ENCODE measurements at regions of chr14 and their contacts with region 1.

Region 1: DNA sequence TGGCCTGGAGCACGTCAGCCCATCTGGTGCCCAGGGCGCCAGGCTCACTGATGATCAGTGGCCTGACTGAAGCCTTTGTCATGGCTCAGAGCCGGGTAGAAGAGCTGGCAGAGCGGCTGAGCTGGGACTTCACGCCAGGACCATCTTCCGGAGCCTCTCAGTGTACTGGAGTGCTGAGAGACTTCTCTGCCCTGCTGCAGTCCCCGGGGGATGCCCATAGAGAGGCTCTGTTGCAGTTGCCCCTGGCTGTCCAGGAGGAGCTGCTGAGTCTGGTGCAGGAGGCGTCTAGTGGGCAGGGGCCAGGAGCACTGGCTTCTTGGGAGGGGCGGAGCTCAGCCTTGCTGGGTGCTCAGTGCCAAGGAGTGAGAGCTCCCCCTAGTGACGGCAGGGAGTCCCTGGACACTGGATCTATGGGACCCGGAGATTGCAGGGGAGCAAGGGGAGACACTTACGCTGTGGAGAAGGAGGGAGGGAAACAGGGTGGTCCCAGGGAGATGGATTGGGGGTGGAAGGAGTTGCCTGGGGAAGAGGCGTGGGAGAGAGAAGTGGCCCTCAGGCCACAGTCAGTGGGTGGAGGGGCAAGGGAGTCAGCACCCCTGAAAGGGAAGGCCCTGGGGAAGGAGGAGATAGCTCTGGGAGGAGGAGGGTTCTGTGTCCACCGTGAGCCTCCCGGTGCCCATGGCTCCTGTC is 2.0 kb downstream of the KHNYN start:
- DNase-seq: peak; percentile 90
- ATAC-seq: peak; percentile 41
- H3K4me3 ChIP-seq: peak overlapping the region in 4 of 5 experiments; percentile 77 to 98 (median 93)
- H3K4me3 Mint-ChIP-seq: peak overlapping the region; percentile 94
- H3K27ac ChIP-seq: peak overlapping the region; percentile 98 to 99
- H3K27ac Mint-ChIP-seq: peak overlapping the region; percentile 98
- H3K4me1 ChIP-seq: peaks cover 32 to 43% of the 10 kb centered on the region in 2 donors
- H3K4me1 Mint-ChIP-seq: peaks cover 50% of the 10 kb centered on the region
- H3K27me3 ChIP-seq: no peaks in the 10 kb centered on the region
- H3K27me3 Mint-ChIP-seq: no peaks in the 10 kb centered on the region
- CTCF ChIP-seq: peak; percentile 87

Region 2: DNA sequence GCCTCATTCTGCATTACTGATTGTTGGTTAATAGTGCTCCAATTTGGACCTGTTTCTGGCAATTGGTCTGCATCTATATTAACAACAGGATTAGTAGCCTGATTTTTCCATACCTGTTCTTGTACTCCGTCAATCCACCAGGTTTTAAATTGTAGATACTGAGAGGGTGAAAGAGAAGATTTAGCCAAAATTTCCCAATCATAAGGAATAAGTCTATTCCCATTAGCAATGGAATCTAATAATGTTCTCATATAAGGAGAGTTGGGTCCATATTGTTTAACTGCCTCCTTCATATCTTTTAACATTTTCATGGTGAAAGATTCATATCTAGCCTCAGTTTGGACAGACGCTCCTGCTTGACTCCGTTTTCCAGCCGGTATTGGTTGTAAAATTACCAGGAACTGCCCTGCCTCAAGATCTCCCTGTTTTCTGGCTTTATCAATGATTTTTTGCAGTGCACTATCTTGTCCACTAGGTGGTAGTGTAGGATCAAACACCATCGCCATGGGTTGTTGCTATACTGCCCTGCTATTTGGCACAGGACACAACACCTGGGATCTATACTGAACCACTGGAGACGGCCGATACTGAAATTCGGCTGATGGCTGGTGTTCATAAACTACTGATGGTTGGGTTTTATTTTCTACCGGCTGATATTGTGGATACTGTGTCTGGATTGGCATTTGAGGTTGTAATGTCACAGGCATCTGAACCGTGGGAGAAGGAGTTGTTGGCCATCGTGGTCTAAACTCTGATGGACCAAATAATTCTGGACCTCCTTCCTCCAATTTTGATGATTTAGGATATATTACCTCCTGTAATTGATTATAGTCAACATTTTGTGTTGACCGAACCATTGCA is 417.8 kb before region 1 on chr14:
- CTCF ChIA-PET with region 1: no interaction called
- POLR2A ChIA-PET with region 1: no interaction called
- intact Hi-C with region 1: loop called (anchors 5 kb)
- DNase-seq: peak; percentile 83
- ATAC-seq: peak; percentile 92
- H3K4me3 ChIP-seq: no peak overlapping the region
- H3K4me3 Mint-ChIP-seq: no peak overlapping the region
- H3K27ac ChIP-seq: no peak overlapping the region
- H3K27ac Mint-ChIP-seq: no peak overlapping the region
- H3K4me1 ChIP-seq: peaks cover 0 to 3% of the 10 kb centered on the region in 2 donors
- H3K4me1 Mint-ChIP-seq: peaks cover 30% of the 10 kb centered on the region
- H3K27me3 ChIP-seq: no peaks in the 10 kb centered on the region
- H3K27me3 Mint-ChIP-seq: no peaks in the 10 kb centered on the region
- CTCF ChIP-seq: peak; percentile 97

Region 3: GRCh38 chr14:24299255-24300195 is 132.2 kb before region 1 on chr14 and contains the starts of genes DHRS1 and NOP9:
- CTCF ChIA-PET with region 1: interaction called, 28 read pairs
- POLR2A ChIA-PET with region 1: interaction called, 6 read pairs
- intact Hi-C with region 1: no loop called
- DNase-seq: peak; percentile 95
- ATAC-seq: peak; percentile 86
- H3K4me3 ChIP-seq: peak within 1 kb of the TSS; percentile 58 to 93 (median 77)
- H3K4me3 Mint-ChIP-seq: peak within 1 kb of the TSS; percentile 96
- H3K27ac ChIP-seq: peak within 1 kb of the TSS; percentile 79 to 83
- H3K27ac Mint-ChIP-seq: peak within 1 kb of the TSS; percentile 98
- H3K4me1 ChIP-seq: peaks cover 30 to 41% of the 10 kb centered on the region in 2 donors
- H3K4me1 Mint-ChIP-seq: peaks cover 48% of the 10 kb centered on the region
- H3K27me3 ChIP-seq: no peaks in the 10 kb centered on the region
- H3K27me3 Mint-ChIP-seq: no peaks in the 10 kb centered on the region
- CTCF ChIP-seq: no peak
- total RNA-seq, gene DHRS1: 42.7 and 43.7 TPM in 2 replicates
- total RNA-seq, gene NOP9: 22.6 and 24.5 TPM in 2 replicates

Region 4: GRCh38 chr14:24327303-24327702 is 104.4 kb before region 1 on chr14:
- CTCF ChIA-PET with region 1: interaction called, 650 read pairs
- POLR2A ChIA-PET with region 1: interaction called, 42 read pairs
- intact Hi-C with region 1: loop called (anchors 1 kb)
- DNase-seq: no peak
- ATAC-seq: no peak
- H3K4me3 ChIP-seq: no peak overlapping the region
- H3K4me3 Mint-ChIP-seq: no peak overlapping the region
- H3K27ac ChIP-seq: no peak overlapping the region
- H3K27ac Mint-ChIP-seq: no peak overlapping the region
- H3K4me1 ChIP-seq: peaks cover 12 to 17% of the 10 kb centered on the region in 2 donors
- H3K4me1 Mint-ChIP-seq: peaks cover 22% of the 10 kb centered on the region
- H3K27me3 ChIP-seq: peaks cover 0 to 6% (median under 1%) of the 10 kb centered on the region in 4 experiments
- H3K27me3 Mint-ChIP-seq: peaks cover 1% of the 10 kb centered on the region
- CTCF ChIP-seq: no peak

Region 5: GRCh38 chr14:24366721-24367513 is 64.8 kb before region 1 on chr14:
- CTCF ChIA-PET with region 1: interaction called, 148 read pairs
- POLR2A ChIA-PET with region 1: interaction called, 78 read pairs
- intact Hi-C with region 1: loop called (anchors 1 kb)
- DNase-seq: peak; percentile 94
- ATAC-seq: peak; percentile 85
- H3K4me3 ChIP-seq: peak overlapping the region in 4 of 5 experiments; percentile 52 to 64 (median 60)
- H3K4me3 Mint-ChIP-seq: peak overlapping the region; percentile 92
- H3K27ac ChIP-seq: peak overlapping the region; percentile 59 to 70
- H3K27ac Mint-ChIP-seq: peak overlapping the region; percentile 92
- H3K4me1 ChIP-seq: peaks cover 30 to 39% of the 10 kb centered on the region in 2 donors
- H3K4me1 Mint-ChIP-seq: peaks cover 32% of the 10 kb centered on the region
- H3K27me3 ChIP-seq: peaks cover 0 to 32% (median 6%) of the 10 kb centered on the region in 4 experiments
- H3K27me3 Mint-ChIP-seq: peaks cover 10% of the 10 kb centered on the region
- CTCF ChIP-seq: no peak

Region 6: GRCh38 chr14:24418492-24418873 is 13.2 kb before region 1 on chr14:
- CTCF ChIA-PET with region 1: interaction called, 23 read pairs
- POLR2A ChIA-PET with region 1: interaction called, 3 read pairs
- intact Hi-C with region 1: loop called (anchors 2 kb)
- DNase-seq: no peak
- ATAC-seq: no peak
- H3K4me3 ChIP-seq: no peak overlapping the region
- H3K4me3 Mint-ChIP-seq: no peak overlapping the region
- H3K27ac ChIP-seq: no peak overlapping the region
- H3K27ac Mint-ChIP-seq: no peak overlapping the region
- H3K4me1 ChIP-seq: peaks cover 7 to 9% of the 10 kb centered on the region in 2 donors
- H3K4me1 Mint-ChIP-seq: no peaks in the 10 kb centered on the region
- H3K27me3 ChIP-seq: peaks cover 0 to 43% (median 7%) of the 10 kb centered on the region in 4 experiments
- H3K27me3 Mint-ChIP-seq: peaks cover 34% of the 10 kb centered on the region
- CTCF ChIP-seq: no peak

Measured in B cell (primary cell).